Endothelial cell of umbilical vein (primary cell): ENCODE measurements at regions of chr2 and their contacts with region 1.

Region 1: GRCh38 chr2:151238527-151239487 is 22.9 kb downstream of the RBM43 start:
- DNase-seq: peak; percentile 80
- H3K4me3 ChIP-seq: no peak overlapping the region
- H3K27ac ChIP-seq: no peak overlapping the region
- H3K4me1 ChIP-seq: peaks cover 7% of the 10 kb centered on the region
- H3K27me3 ChIP-seq: no peaks in the 10 kb centered on the region
- CTCF ChIP-seq: peak; percentile 53 to 57
- POLR2A ChIP-seq: no peak

Region 2: GRCh38 chr2:149330126-149331022 is 1908.4 kb before region 1 on chr2 and contains the start of gene LYPD6:
- CTCF ChIA-PET with region 1: no interaction called
- POLR2A ChIA-PET with region 1: no interaction called
- dilution Hi-C with region 1: no loop called
- intact Hi-C with region 1: loop called (anchors 10 kb)
- DNase-seq: peak; percentile 76
- H3K4me3 ChIP-seq: peak within 1 kb of the TSS; percentile 78 to 89 (median 87)
- H3K27ac ChIP-seq: peak within 1 kb of the TSS; percentile 41
- H3K4me1 ChIP-seq: peaks cover 12% of the 10 kb centered on the region
- H3K27me3 ChIP-seq: no peaks in the 10 kb centered on the region
- CTCF ChIP-seq: peak; percentile 6 to 15
- POLR2A ChIP-seq: no peak
- total RNA-seq, gene LYPD6: 3.1 and 4.0 TPM in 2 replicates

Region 3: DNA sequence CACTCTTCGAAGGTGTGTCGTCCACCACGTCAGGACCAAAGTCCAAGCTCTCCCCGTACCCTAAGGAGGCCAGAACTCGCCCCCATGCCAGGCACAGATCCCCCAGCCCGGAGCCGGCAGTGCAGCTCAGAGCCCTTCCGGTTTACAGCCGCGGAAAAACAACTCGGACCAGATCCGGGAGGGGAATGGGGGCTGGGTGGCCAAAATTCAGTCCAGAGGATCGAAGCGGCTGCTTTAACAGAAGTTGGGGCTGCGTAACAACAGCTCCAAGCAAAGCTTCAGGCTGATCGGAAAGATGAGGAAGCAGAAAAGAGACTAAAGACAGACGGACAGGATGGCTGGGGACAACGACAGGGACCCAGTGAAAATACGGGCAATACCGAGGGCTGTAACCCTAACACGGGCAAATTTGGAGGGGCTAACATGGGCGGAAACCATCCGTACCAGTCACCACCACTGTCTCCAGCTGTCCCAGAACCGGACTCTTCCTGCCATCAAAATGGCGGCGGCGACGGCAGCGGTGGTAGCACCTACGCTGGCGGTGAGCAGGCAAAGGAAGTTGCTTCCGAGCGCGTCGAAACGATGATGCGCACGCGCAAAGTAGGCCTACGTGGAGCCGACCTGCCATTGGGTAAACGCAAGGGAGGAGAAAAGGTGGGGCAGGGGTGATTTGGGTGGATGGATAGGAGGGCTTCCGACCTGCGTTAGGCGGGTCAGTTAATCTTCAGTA is 1651.4 kb before region 1 on chr2 and contains the start of gene MMADHC:
- CTCF ChIA-PET with region 1: interaction called, 120 read pairs
- POLR2A ChIA-PET with region 1: no interaction called
- dilution Hi-C with region 1: no loop called
- intact Hi-C with region 1: no loop called
- DNase-seq: peak; percentile 94
- H3K4me3 ChIP-seq: peak within 1 kb of the TSS; percentile 46 to 92 (median 66)
- H3K27ac ChIP-seq: peak within 1 kb of the TSS; percentile 89
- H3K4me1 ChIP-seq: peaks cover 24% of the 10 kb centered on the region
- H3K27me3 ChIP-seq: no peaks in the 10 kb centered on the region
- CTCF ChIP-seq: no peak
- POLR2A ChIP-seq: peak; percentile 95
- total RNA-seq, gene MMADHC: 115 and 119 TPM in 2 replicates

Region 4: GRCh38 chr2:149715005-149715592 is 1523.7 kb before region 1 on chr2:
- CTCF ChIA-PET with region 1: no interaction called
- POLR2A ChIA-PET with region 1: no interaction called
- dilution Hi-C with region 1: no loop called
- intact Hi-C with region 1: loop called (anchors 10 kb)
- DNase-seq: peak; percentile 63
- H3K4me3 ChIP-seq: no peak overlapping the region
- H3K27ac ChIP-seq: no peak overlapping the region
- H3K4me1 ChIP-seq: no peaks in the 10 kb centered on the region
- H3K27me3 ChIP-seq: no peaks in the 10 kb centered on the region
- CTCF ChIP-seq: peak; percentile 71 to 76
- POLR2A ChIP-seq: no peak

Region 5: GRCh38 chr2:150601280-150602038 is 637.3 kb before region 1 on chr2:
- CTCF ChIA-PET with region 1: interaction called, 18 read pairs
- POLR2A ChIA-PET with region 1: no interaction called
- dilution Hi-C with region 1: no loop called
- intact Hi-C with region 1: no loop called
- DNase-seq: peak; percentile 61
- H3K4me3 ChIP-seq: no peak overlapping the region
- H3K27ac ChIP-seq: no peak overlapping the region
- H3K4me1 ChIP-seq: no peaks in the 10 kb centered on the region
- H3K27me3 ChIP-seq: no peaks in the 10 kb centered on the region
- CTCF ChIP-seq: no peak
- POLR2A ChIP-seq: no peak

Region 6: GRCh38 chr2:151289369-151290088 is 50.7 kb after region 1 on chr2 and contains the start of gene NMI:
- CTCF ChIA-PET with region 1: interaction called, 3 read pairs
- POLR2A ChIA-PET with region 1: no interaction called
- dilution Hi-C with region 1: no loop called
- intact Hi-C with region 1: loop called (anchors 1 kb)
- DNase-seq: peak; percentile 82
- H3K4me3 ChIP-seq: peak within 1 kb of the TSS; percentile 75 to 99 (median 78)
- H3K27ac ChIP-seq: peak within 1 kb of the TSS; percentile 90
- H3K4me1 ChIP-seq: peaks cover 16% of the 10 kb centered on the region
- H3K27me3 ChIP-seq: no peaks in the 10 kb centered on the region
- CTCF ChIP-seq: peak in 1 of 2 donors; percentile 15
- POLR2A ChIP-seq: peak; percentile 53
- total RNA-seq, gene NMI: 17.1 and 24.9 TPM in 2 replicates